A673 (cell line): ENCODE measurements at regions of chr12 and their contacts with region 1.

Region 1: GRCh38 chr12:6873094-6874014 is at the start of gene SPSB2:
- DNase-seq: peak; percentile 98
- H3K4me3 ChIP-seq: peak within 1 kb of the TSS; percentile 75
- H3K27ac ChIP-seq: peak within 1 kb of the TSS; percentile 74
- H3K4me1 ChIP-seq: peaks cover 22% of the 10 kb centered on the region
- H3K27me3 ChIP-seq: no peaks in the 10 kb centered on the region
- CTCF ChIP-seq: no peak
- total RNA-seq, gene SPSB2: 8.1 and 10.8 TPM in 2 replicates

Region 2: GRCh38 chr12:6851921-6852650 is 21.3 kb before region 1 on chr12 and contains the start of gene USP5:
- CTCF ChIA-PET with region 1: interaction called, 13 read pairs
- POLR2A ChIA-PET with region 1: interaction called, 3 read pairs
- intact Hi-C with region 1: no loop called
- DNase-seq: peak; percentile 100
- H3K4me3 ChIP-seq: peak within 1 kb of the TSS; percentile 67
- H3K27ac ChIP-seq: peak within 1 kb of the TSS; percentile 81
- H3K4me1 ChIP-seq: peaks cover 24% of the 10 kb centered on the region
- H3K27me3 ChIP-seq: no peaks in the 10 kb centered on the region
- CTCF ChIP-seq: no peak
- total RNA-seq, gene USP5: 209 and 224 TPM in 2 replicates

Region 3: GRCh38 chr12:6890789-6891645 is 17.7 kb after region 1 on chr12:
- CTCF ChIA-PET with region 1: interaction called, 6 read pairs
- POLR2A ChIA-PET with region 1: interaction called, 3 read pairs
- intact Hi-C with region 1: loop called (anchors 2 kb)
- DNase-seq: peak; percentile 98
- H3K4me3 ChIP-seq: peak overlapping the region; percentile 46
- H3K27ac ChIP-seq: peak overlapping the region; percentile 97
- H3K4me1 ChIP-seq: peaks cover 7% of the 10 kb centered on the region
- H3K27me3 ChIP-seq: no peaks in the 10 kb centered on the region
- CTCF ChIP-seq: peak; percentile 77

Region 4: GRCh38 chr12:6937481-6938297 is 64.3 kb after region 1 on chr12:
- CTCF ChIA-PET with region 1: interaction called, 4 read pairs
- POLR2A ChIA-PET with region 1: interaction called, 4 read pairs
- intact Hi-C with region 1: loop called (anchors 5 kb)
- DNase-seq: peak; percentile 98
- H3K4me3 ChIP-seq: peak overlapping the region; percentile 62
- H3K27ac ChIP-seq: peak overlapping the region; percentile 98
- H3K4me1 ChIP-seq: peaks cover 16% of the 10 kb centered on the region
- H3K27me3 ChIP-seq: no peaks in the 10 kb centered on the region
- CTCF ChIP-seq: peak; percentile 99